ENCODE measurements at regions of chr4 and their contacts with region 1.

Region 1: DNA sequence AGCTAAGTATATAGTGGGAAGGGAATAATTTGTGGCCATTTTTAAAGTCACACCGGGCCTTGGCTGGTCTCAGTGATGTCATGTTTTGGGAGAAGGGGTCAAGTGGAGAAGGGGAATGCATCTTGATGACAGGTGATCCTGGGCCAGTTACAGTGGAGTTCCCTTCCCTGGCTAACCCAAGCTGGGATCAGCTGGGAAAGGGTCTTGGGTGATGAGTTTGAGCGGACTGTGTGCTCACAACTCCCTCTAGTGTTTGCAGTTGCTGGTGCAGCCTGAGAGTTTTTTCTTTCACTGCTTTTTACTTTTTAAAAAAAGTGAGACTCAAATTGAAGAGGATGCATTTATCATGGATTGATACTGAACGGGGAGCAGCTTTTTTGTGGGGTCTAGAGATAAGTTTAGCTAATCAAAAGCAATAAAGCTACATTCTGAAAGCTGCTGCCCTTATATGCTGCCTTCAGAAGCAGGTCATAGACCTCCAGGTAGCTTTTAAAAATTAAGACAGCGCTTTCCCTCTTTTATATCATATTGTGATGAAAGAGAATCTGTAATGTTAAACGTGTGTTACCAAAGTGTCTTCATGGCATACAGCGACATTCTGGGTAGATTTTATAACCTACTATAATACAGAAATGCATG is 164.7 kb downstream of the DCLK2 start:
- DNase-seq: peak; percentile 49
- H3K4me3 Mint-ChIP-seq: no peak overlapping the region
- H3K27ac Mint-ChIP-seq: no peak overlapping the region
- H3K4me1 Mint-ChIP-seq: peaks cover 4% of the 10 kb centered on the region
- H3K27me3 Mint-ChIP-seq: no peaks in the 10 kb centered on the region
- CTCF ChIP-seq: peak; percentile 86

Region 2: DNA sequence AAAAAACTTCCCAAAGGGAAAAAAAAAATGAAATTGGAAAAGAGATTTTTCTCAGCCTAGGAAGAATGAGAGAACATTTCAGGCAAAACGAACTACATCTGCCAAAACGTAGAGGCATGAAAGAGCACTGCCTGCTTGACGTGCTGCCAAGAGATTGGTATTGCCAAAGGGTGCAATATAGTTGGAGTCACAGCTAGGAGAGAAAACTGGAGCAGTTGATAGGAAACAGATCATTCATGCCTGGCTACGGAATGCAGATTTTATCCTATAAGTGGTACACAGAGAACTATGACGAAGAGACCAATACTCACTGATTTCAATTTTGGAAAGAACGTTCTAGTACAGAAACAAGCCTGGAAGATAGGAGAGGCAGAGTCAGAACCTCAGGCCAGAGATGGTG is 358.9 kb before region 1 on chr4:
- CTCF ChIA-PET with region 1: no interaction called
- POLR2A ChIA-PET with region 1: no interaction called
- intact Hi-C with region 1: no loop called
- DNase-seq: peak; percentile 50
- H3K4me3 Mint-ChIP-seq: no peak overlapping the region
- H3K27ac Mint-ChIP-seq: no peak overlapping the region
- H3K4me1 Mint-ChIP-seq: peaks cover 10% of the 10 kb centered on the region
- H3K27me3 Mint-ChIP-seq: no peaks in the 10 kb centered on the region
- CTCF ChIP-seq: no peak

Region 3: GRCh38 chr4:149987330-149988086 is 255.4 kb before region 1 on chr4:
- CTCF ChIA-PET with region 1: interaction called, 19 read pairs
- POLR2A ChIA-PET with region 1: no interaction called
- intact Hi-C with region 1: no loop called
- DNase-seq: no peak
- H3K4me3 Mint-ChIP-seq: no peak overlapping the region
- H3K27ac Mint-ChIP-seq: no peak overlapping the region
- H3K4me1 Mint-ChIP-seq: no peaks in the 10 kb centered on the region
- H3K27me3 Mint-ChIP-seq: no peaks in the 10 kb centered on the region
- CTCF ChIP-seq: no peak

Region 4: GRCh38 chr4:150010525-150011126 is 232.3 kb before region 1 on chr4:
- CTCF ChIA-PET with region 1: interaction called, 191 read pairs
- POLR2A ChIA-PET with region 1: no interaction called
- intact Hi-C with region 1: loop called (anchors 1 kb)
- DNase-seq: peak; percentile 76
- H3K4me3 Mint-ChIP-seq: no peak overlapping the region
- H3K27ac Mint-ChIP-seq: no peak overlapping the region
- H3K4me1 Mint-ChIP-seq: no peaks in the 10 kb centered on the region
- H3K27me3 Mint-ChIP-seq: no peaks in the 10 kb centered on the region
- CTCF ChIP-seq: peak; percentile 64

Region 5: DNA sequence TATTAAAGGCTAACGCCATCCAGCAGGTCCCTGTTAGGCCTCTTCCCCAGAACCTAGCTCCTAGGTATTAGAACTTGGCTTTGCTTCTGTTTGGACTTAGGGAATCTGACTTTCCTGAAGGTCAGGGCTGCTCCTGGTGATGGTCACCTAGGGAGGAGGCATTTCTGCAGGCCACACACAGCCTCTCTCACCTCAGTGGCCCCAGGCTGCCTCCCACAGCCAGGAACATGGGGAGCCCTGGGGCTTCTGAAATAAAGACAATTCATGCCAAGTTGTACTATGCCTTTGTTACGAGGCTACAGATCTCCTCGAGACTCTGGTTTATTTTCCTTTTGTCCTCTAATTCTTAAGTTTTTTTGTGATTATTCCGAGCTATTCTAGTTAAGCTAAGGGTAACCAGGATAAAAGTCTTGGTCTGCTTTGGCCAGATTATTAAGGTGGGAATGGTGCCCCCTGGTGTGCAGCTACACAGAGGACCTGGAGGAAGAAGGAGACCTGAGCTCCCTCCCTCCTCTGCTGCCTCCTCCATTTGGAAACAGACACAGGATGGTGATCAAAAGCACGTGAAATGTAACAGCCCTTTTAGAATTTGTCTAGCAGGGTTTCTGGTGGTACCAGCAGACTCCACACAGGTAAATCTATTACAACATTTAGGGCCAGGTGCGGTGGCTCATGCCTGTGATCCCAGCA is 33.7 kb before region 1 on chr4:
- CTCF ChIA-PET with region 1: interaction called, 17 read pairs
- POLR2A ChIA-PET with region 1: no interaction called
- intact Hi-C with region 1: no loop called
- DNase-seq: peak; percentile 73
- H3K4me3 Mint-ChIP-seq: no peak overlapping the region
- H3K27ac Mint-ChIP-seq: no peak overlapping the region
- H3K4me1 Mint-ChIP-seq: peaks cover 6% of the 10 kb centered on the region
- H3K27me3 Mint-ChIP-seq: no peaks in the 10 kb centered on the region
- CTCF ChIP-seq: peak; percentile 58

Region 6: DNA sequence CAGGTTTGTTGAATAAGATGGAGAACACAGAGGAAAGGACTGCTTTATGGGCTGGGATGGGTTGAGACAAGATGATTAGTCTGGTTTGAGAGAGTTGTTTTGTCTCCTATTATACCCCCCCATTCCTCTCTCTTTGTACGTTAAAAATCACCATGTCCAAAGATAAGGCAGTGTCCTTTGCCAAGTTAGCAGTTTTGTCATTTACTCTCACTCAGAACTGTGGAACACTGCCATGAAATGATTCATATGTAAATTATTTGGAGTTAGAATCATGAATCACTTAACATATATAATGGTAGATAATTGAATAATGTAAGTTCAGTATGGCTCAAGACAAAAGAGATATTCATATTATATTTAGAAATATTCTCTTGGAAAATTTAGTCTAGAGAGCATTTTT is 13.4 kb before region 1 on chr4:
- CTCF ChIA-PET with region 1: interaction called, 39 read pairs
- POLR2A ChIA-PET with region 1: no interaction called
- intact Hi-C with region 1: no loop called
- DNase-seq: peak; percentile 80
- H3K4me3 Mint-ChIP-seq: no peak overlapping the region
- H3K27ac Mint-ChIP-seq: no peak overlapping the region
- H3K4me1 Mint-ChIP-seq: peaks cover 24% of the 10 kb centered on the region
- H3K27me3 Mint-ChIP-seq: no peaks in the 10 kb centered on the region
- CTCF ChIP-seq: no peak

Region 7: GRCh38 chr4:151202851-151203455 is 960.0 kb after region 1 on chr4:
- CTCF ChIA-PET with region 1: no interaction called
- POLR2A ChIA-PET with region 1: no interaction called
- intact Hi-C with region 1: no loop called
- DNase-seq: no peak
- H3K4me3 Mint-ChIP-seq: no peak overlapping the region
- H3K27ac Mint-ChIP-seq: no peak overlapping the region
- H3K4me1 Mint-ChIP-seq: no peaks in the 10 kb centered on the region
- H3K27me3 Mint-ChIP-seq: no peaks in the 10 kb centered on the region
- CTCF ChIP-seq: no peak

Measured in MCF 10A (cell line).